Posterior vena cava (tissue), 2 donors: ENCODE measurements at regions of chr16 and their contacts with region 1.

Region 1: DNA sequence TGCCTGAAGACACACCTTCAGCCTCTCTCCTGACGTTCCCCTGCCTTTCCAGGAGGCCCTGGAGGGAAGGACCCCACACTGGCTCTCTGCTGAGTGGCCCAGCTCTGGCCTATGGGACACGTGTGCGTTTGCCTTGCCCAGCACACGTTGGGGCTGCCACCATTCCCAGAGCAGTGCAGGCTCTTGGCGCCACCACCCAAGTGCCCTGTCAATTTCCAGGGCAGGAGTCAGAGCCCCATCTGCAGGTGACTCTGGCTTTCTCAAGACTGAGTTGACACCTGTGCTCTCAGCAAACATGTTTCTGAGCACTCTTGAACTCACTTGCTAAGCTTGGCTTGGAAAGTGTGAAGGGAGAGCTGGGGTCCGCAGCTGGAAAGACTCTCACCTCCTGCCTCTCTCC is 4.7 kb upstream of the IRF8 start:
- DNase-seq: no peak

Region 2: GRCh38 chr16:85869785-85870558 is 24.3 kb before region 1 on chr16:
- intact Hi-C with region 1: loop called in 1 of 2 experiments (anchors 2 kb)
- DNase-seq: no peak

Region 3: GRCh38 chr16:87447323-87447722 is 1553.1 kb after region 1 on chr16:
- intact Hi-C with region 1: no loop called
- DNase-seq: no peak